ENCODE measurements at regions of chr11 and their contacts with region 1.

Region 1: DNA sequence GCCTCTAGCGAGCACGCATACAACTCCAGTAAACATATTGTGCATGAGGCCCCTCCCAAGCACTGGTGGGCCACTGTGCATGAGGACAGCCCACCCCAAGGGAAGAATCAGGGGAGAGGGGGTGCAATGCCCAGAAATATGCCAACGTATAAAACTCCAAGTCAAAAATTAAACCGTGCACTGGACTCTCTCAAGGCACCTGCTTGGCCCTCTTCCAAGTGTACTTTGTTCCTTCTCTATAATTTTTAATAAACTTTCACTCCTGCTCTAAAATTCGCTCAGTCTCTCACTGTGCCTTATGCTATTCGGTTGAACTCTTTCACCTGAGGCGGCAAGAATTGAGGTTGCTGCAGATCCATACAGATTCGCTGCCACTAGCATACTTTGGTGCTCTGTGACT is 465.3 kb upstream of the TENM4 start:
- DNase-seq: no peak
- H3K4me3 ChIP-seq: no peak overlapping the region
- H3K27ac ChIP-seq: no peak overlapping the region
- H3K4me1 ChIP-seq: no peaks in the 10 kb centered on the region
- H3K27me3 ChIP-seq: no peaks in the 10 kb centered on the region
- CTCF ChIP-seq: no peak

Region 2: DNA sequence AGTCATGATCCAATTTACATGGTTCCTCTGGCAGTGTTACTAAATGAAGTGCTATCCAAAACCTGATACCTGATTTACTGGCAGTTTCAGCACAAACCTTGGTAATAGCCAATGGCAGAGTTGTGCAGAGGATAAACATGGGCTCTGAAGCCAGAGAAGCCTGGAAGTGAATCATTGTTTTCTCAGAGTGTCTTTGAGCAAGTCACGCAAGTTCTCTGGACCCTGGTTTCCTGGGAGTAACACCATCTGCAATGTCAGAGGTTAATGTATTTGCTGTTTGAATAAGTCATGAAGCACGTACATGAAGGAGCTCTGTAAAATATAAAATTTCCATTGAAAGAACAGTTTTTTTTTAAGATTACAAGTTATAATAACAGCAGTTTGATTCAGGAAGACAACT is 1109.2 kb before region 1 on chr11:
- CTCF ChIA-PET with region 1: no interaction called
- POLR2A ChIA-PET with region 1: no interaction called
- intact Hi-C with region 1: no loop called
- DNase-seq: no peak
- H3K4me3 ChIP-seq: no peak overlapping the region
- H3K27ac ChIP-seq: no peak overlapping the region
- H3K4me1 ChIP-seq: peaks cover 13% of the 10 kb centered on the region
- H3K27me3 ChIP-seq: no peaks in the 10 kb centered on the region
- CTCF ChIP-seq: no peak

Region 3: GRCh38 chr11:79578116-79578768 is 327.9 kb before region 1 on chr11:
- CTCF ChIA-PET with region 1: interaction called, 12 read pairs
- POLR2A ChIA-PET with region 1: no interaction called
- intact Hi-C with region 1: no loop called
- DNase-seq: no peak
- H3K4me3 ChIP-seq: no peak overlapping the region
- H3K27ac ChIP-seq: no peak overlapping the region
- H3K4me1 ChIP-seq: no peaks in the 10 kb centered on the region
- H3K27me3 ChIP-seq: no peaks in the 10 kb centered on the region
- CTCF ChIP-seq: no peak

Region 4: GRCh38 chr11:80297884-80298632 is 391.9 kb after region 1 on chr11:
- CTCF ChIA-PET with region 1: no interaction called
- POLR2A ChIA-PET with region 1: no interaction called
- intact Hi-C with region 1: no loop called
- DNase-seq: no peak
- H3K4me3 ChIP-seq: no peak overlapping the region
- H3K27ac ChIP-seq: no peak overlapping the region
- H3K4me1 ChIP-seq: no peaks in the 10 kb centered on the region
- H3K27me3 ChIP-seq: no peaks in the 10 kb centered on the region
- CTCF ChIP-seq: no peak